Calu3 (cell line): ENCODE measurements at regions of chr12 and their contacts with region 1.

Region 1: GRCh38 chr12:46110928-46111699 is 120.7 kb upstream of the SCAF11 start:
- DNase-seq: no peak
- H3K4me3 Mint-ChIP-seq: no peak overlapping the region
- H3K27ac Mint-ChIP-seq: peak overlapping the region; percentile 72
- H3K4me1 Mint-ChIP-seq: peaks cover 16% of the 10 kb centered on the region
- H3K27me3 Mint-ChIP-seq: no peaks in the 10 kb centered on the region
- CTCF ChIP-seq: no peak

Region 2: DNA sequence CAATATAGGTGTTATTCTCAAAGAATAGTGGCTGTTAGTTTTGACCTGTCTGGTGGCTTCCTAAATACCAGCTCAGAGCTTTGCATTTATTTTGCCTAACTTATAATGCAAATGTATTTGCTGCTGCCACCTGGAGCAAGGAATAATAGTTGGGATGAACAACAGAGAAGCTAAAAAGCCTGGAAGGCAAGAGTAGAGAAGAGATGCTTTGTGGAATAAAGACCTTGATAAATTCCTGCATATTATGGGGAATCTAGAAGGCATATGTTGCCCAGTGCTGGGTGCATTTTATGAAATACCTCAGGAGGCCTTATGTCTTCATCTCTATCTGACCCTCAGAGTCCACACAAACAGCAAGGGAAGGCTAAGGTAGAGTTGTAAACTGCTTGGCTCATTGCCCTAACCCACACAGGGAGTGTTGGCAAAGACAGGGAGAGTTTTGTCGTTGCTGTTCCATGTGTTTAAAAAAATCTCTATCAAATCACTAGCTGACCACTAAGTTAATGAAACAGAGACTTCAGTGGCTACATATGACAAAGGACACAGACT is 67.1 kb before region 1 on chr12:
- CTCF ChIA-PET with region 1: no interaction called
- intact Hi-C with region 1: no loop called
- DNase-seq: no peak
- H3K4me3 Mint-ChIP-seq: no peak overlapping the region
- H3K27ac Mint-ChIP-seq: no peak overlapping the region
- H3K4me1 Mint-ChIP-seq: no peaks in the 10 kb centered on the region
- H3K27me3 Mint-ChIP-seq: no peaks in the 10 kb centered on the region
- CTCF ChIP-seq: no peak

Region 3: DNA sequence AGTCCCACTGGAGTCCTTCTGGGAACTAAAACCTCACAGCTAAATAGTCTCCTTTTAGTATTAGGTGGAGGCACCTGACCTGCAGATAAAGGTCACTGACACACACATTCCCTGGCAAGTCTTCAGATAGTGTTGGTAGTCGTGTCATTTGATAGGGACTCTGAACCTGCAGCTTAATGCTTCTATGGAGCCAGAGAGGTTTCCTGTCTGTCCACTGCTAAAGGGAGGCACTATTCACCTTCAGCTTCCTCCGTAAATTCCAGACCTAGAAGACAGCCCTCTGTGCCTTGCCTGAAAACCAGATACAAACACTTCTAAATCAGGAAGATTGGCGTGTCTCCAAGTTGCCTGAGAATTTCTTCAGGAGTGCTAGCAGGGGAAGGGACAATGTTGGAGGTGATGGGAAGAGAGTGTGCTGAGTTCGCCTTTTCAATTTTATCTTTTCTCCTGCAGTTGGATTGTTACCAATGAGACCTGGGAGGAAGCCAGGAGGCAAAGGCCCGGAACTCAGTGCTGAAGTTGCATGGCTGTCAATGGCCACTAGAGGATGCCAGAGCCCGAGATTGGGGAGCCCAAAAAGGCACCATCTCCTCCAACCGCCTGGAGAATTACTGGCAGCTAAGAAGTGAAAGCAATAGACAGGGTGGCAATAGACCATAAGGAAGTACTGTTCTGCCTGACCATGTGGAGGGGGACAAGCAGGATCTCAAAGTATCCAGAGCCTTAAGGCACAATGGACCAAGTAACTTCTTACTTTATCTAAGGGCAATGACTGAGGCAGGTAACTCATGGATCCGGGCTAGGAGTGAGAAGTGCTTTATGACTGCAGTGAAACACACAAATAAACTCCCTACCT is 39.1 kb before region 1 on chr12:
- CTCF ChIA-PET with region 1: interaction called, 3 read pairs
- intact Hi-C with region 1: loop called (anchors 2 kb)
- DNase-seq: peak; percentile 78
- H3K4me3 Mint-ChIP-seq: no peak overlapping the region
- H3K27ac Mint-ChIP-seq: peak overlapping the region; percentile 68
- H3K4me1 Mint-ChIP-seq: peaks cover 22% of the 10 kb centered on the region
- H3K27me3 Mint-ChIP-seq: no peaks in the 10 kb centered on the region
- CTCF ChIP-seq: peak; percentile 84

Region 4: DNA sequence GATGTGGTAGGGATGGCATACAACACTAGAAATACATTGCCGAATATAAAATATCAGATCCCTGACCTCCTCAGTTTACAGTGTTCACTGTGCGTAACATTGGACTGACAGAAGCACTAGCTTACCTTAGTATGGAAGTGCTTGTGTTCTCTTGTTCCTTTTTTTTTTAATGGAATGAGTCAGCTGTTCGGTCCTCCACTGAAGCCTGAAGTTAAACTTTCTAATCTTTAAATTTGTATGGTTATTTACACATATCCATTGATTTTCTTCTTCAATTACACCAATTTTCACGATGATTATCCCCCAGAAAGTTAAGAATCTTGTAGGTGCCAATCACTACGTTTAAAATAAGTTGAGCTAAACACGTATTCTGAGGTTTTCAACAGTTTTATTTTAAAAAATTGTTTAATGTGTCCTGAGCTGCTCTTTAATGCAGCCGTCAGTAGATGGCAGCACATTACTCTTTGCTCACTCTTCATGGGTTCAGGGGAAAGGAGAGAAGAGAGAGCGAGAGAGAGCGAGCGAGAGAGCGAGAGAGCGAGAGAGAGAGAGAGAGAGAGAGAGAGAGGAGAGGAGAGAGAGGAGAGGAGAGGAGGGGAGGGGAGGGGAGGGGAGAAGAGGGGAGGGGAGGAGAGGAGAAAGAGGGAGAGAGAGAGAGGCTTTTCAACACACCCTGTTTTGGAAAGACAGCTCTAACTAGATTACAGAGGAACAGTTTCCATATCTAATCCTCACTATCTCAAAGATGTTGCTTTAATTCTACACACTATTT is 13.9 kb after region 1 on chr12:
- CTCF ChIA-PET with region 1: interaction called, 14 read pairs
- intact Hi-C with region 1: no loop called
- DNase-seq: peak; percentile 34
- H3K4me3 Mint-ChIP-seq: peak overlapping the region; percentile 54
- H3K27ac Mint-ChIP-seq: peak overlapping the region; percentile 88
- H3K4me1 Mint-ChIP-seq: peaks cover 26% of the 10 kb centered on the region
- H3K27me3 Mint-ChIP-seq: no peaks in the 10 kb centered on the region
- CTCF ChIP-seq: no peak

Region 5: GRCh38 chr12:46209914-46210872 is 99.1 kb after region 1 on chr12:
- CTCF ChIA-PET with region 1: no interaction called
- intact Hi-C with region 1: no loop called
- DNase-seq: peak; percentile 59
- H3K4me3 Mint-ChIP-seq: peak overlapping the region; percentile 37
- H3K27ac Mint-ChIP-seq: peak overlapping the region; percentile 85
- H3K4me1 Mint-ChIP-seq: peaks cover 25% of the 10 kb centered on the region
- H3K27me3 Mint-ChIP-seq: no peaks in the 10 kb centered on the region
- CTCF ChIP-seq: no peak

Region 6: GRCh38 chr12:46303039-46303666 is 192.0 kb after region 1 on chr12:
- CTCF ChIA-PET with region 1: no interaction called
- intact Hi-C with region 1: no loop called
- DNase-seq: peak; percentile 16
- H3K4me3 Mint-ChIP-seq: no peak overlapping the region
- H3K27ac Mint-ChIP-seq: no peak overlapping the region
- H3K4me1 Mint-ChIP-seq: no peaks in the 10 kb centered on the region
- H3K27me3 Mint-ChIP-seq: no peaks in the 10 kb centered on the region
- CTCF ChIP-seq: peak; percentile 26

Region 7: DNA sequence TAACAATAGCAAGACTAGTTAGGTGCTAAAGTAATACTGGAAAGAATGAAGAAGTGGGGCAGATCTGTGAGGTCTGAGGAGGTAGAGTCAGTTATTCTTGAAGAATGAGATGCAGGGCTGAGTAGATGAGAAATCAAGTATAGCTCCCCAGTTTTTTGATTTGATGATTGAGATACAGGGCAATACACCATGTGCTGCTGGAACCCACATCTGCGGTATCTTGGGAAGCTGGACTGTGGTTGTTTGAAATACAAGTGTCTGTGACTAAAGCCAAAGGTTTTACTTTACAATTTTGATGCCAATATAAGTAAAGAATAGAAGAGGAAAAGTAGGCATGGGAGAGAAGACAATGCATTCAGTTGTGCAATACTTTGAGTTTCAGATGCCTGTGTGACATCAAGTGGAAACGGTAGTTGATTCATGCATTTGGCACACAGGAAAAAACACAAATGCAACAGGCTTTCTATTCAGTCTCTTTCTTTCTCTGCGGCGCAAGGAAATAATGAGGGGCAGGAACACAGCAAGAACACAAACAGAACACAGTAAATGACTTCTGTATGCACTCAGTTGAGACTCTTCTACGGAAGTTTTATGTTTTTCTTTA is 451.6 kb after region 1 on chr12:
- CTCF ChIA-PET with region 1: no interaction called
- intact Hi-C with region 1: no loop called
- DNase-seq: no peak
- H3K4me3 Mint-ChIP-seq: no peak overlapping the region
- H3K27ac Mint-ChIP-seq: no peak overlapping the region
- H3K4me1 Mint-ChIP-seq: peaks cover 15% of the 10 kb centered on the region
- H3K27me3 Mint-ChIP-seq: no peaks in the 10 kb centered on the region
- CTCF ChIP-seq: no peak